ENCODE measurements at regions of chr6 and their contacts with region 1.

Region 1: GRCh38 chr6:17803409-17803808 is 96.7 kb upstream of the NUP153 start:
- DNase-seq: no peak
- H3K4me3 Mint-ChIP-seq: no peak overlapping the region
- H3K27ac Mint-ChIP-seq: no peak overlapping the region
- H3K4me1 Mint-ChIP-seq: no peaks in the 10 kb centered on the region
- H3K27me3 Mint-ChIP-seq: peaks cover 23% of the 10 kb centered on the region

Region 2: DNA sequence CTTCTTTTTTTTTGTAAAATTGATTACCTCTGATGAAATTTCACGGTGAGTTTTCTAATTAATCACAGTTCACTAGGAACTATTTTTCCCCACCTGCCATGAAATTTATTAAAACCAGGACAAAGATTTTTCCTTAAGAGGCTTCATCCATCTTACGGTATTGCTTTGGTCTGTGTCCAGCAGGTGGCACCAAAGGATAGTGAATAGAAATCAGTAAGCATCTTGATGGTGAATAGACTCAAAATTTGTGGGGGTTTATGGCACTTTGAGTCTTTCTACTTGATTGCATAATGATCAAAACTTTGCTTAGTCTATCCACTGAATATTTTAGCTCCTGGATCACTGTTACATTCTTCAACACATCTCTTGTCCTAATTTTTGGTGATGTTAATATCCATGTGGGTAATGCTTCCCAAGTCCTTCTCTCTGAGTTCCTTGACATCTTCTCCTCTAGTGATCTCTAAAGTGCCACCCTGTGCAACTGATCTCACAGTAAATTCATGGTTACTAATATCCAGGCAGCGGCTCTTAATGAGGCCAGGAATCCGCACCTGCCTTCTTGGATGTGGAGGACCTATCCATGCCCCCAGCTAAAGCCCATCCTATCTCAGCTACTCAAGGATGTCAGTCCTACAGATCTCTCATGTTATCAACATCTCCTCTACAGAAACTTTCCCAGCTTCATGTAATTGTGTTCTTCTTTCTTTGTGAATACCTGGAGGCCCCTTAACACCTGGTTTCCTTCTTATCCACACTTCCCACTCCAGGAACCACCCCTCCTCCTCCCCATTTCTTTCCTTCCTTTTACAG is 647.1 kb before region 1 on chr6:
- intact Hi-C with region 1: loop called (anchors 5 kb)
- DNase-seq: peak; percentile 85
- H3K4me3 Mint-ChIP-seq: no peak overlapping the region
- H3K27ac Mint-ChIP-seq: no peak overlapping the region
- H3K4me1 Mint-ChIP-seq: no peaks in the 10 kb centered on the region
- H3K27me3 Mint-ChIP-seq: peaks cover 6% of the 10 kb centered on the region

Region 3: GRCh38 chr6:17700421-17701416 is 102.7 kb before region 1 on chr6:
- intact Hi-C with region 1: loop called (anchors 5 kb)
- DNase-seq: no peak
- H3K4me3 Mint-ChIP-seq: no peak overlapping the region
- H3K27ac Mint-ChIP-seq: peak overlapping the region; percentile 41
- H3K4me1 Mint-ChIP-seq: peaks cover 36% of the 10 kb centered on the region
- H3K27me3 Mint-ChIP-seq: no peaks in the 10 kb centered on the region

Region 4: GRCh38 chr6:17762651-17763050 is 40.8 kb before region 1 on chr6:
- intact Hi-C with region 1: no loop called
- DNase-seq: no peak
- H3K4me3 Mint-ChIP-seq: no peak overlapping the region
- H3K27ac Mint-ChIP-seq: no peak overlapping the region
- H3K4me1 Mint-ChIP-seq: peaks cover 5% of the 10 kb centered on the region
- H3K27me3 Mint-ChIP-seq: peaks cover 19% of the 10 kb centered on the region